Heart right ventricle (tissue), 16 donors: ENCODE measurements at regions of chr18 and their contacts with region 1.

Region 1: DNA sequence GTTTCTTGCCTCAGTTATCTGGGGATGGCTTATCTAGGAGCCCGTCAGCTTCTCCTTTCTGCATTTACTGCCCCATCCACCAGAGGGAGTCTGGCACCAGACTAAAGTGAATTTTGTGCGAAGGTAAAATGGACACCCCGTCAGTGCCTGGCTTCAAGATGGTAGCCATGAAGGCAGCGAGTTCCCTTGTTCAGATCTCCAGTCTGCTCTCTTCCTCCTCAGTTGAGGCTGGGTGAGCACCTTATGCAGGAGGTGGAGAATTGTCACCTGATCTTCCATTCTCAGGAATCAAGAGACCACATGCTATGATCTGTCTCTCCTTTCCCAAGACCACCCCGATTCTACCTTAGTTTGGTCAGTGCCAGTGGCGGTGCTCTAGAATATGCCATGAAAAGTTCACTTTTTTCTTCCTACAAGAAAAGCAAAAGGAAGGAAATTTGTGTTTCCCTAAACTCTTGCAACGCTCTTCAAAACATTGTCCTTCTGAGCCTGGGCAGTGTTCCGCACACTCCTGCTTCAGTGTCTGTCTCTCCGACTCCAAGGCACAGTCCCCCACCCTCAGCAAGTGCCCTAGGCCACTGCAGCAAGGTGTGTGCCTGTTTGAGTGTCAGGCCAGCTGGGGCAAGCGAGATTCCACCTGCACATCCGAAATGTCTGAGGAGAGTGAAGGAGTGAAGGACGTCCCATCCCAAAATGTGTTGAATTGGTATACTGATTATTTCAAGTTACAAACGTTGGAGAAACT is 168.6 kb downstream of the SS18 start:
- DNase-seq: no peak
- ATAC-seq: no peak
- H3K4me3 ChIP-seq: no peak overlapping the region
- H3K27ac ChIP-seq: no peak overlapping the region
- H3K4me1 ChIP-seq: no peaks in the 10 kb centered on the region
- H3K27me3 ChIP-seq: peaks cover 0 to 4% (median 0%) of the 10 kb centered on the region in 7 donors
- CTCF ChIP-seq: peak in 7 of 9 donors; percentile 28 to 62 (median 34)

Region 2: GRCh38 chr18:26164571-26164970 is 242.7 kb after region 1 on chr18:
- intact Hi-C with region 1: loop called in 1 of 10 experiments (anchors 10 kb)
- DNase-seq: no peak
- ATAC-seq: no peak
- H3K4me3 ChIP-seq: no peak overlapping the region
- H3K27ac ChIP-seq: no peak overlapping the region
- H3K4me1 ChIP-seq: no peaks in the 10 kb centered on the region
- H3K27me3 ChIP-seq: no peaks in the 10 kb centered on the region
- CTCF ChIP-seq: no peak